Stomach (tissue), 19 donors: ENCODE measurements at regions of chr1 and their contacts with region 1.

Region 1: DNA sequence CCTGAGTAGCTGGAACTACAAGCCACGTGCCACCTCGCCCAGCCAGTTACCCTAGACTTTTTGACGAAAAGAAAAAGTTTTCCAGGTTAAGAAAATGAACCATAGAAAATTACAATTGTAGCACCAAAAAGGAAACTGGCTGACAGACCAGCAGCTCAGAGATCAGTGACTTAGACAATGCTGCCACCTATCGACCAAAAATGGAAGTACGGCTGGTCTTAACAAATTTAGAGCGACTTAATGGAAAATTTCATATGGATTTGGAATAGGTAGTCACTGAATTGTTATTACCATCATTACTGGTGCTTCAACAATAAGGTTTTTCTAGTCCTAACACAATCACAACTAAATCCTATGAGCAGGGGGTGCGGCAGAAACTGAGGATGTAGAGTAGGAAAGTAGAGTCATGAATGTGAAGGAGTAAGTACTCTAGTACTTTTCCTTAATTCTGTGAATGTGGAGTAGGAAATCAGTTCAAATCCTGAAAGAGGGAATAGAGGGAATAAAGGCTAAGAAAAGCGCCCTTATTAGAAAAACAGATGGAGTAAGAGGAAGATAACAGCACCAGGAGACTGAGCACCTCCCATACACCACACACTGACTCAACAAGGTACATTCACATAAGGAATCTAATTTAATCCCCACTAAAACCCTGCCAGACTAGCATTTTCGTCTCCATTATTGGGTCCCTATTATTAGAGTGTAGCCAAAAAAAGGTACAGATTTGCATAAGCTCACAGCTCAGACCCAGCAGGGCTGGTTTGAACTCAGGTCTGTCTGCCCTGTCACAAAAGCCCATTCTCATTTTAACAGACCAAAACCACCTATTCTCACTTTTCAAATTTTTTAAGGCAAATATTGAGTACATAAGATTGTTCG is 37.9 kb upstream of the MGST3 start:
- DNase-seq: peak; percentile 85 to 92
- H3K4me3 ChIP-seq: no peak overlapping the region
- H3K27ac ChIP-seq: no peak overlapping the region
- H3K4me1 ChIP-seq: peaks cover 5 to 8% (median 7%) of the 10 kb centered on the region in 4 donors
- H3K27me3 ChIP-seq: peaks cover 0 to 35% (median 0%) of the 10 kb centered on the region in 3 donors
- CTCF ChIP-seq: peak in 6 of 7 experiments; percentile 82 to 96 (median 94)
- EP300 ChIP-seq: no peak
- POLR2A ChIP-seq: no peak

Region 2: GRCh38 chr1:165330483-165330882 is 262.7 kb before region 1 on chr1:
- intact Hi-C with region 1: no loop called
- DNase-seq: no peak
- H3K4me3 ChIP-seq: no peak overlapping the region
- H3K27ac ChIP-seq: no peak overlapping the region
- H3K4me1 ChIP-seq: no peaks in the 10 kb centered on the region
- H3K27me3 ChIP-seq: peaks cover 0 to 23% (median 0%) of the 10 kb centered on the region in 3 donors
- CTCF ChIP-seq: no peak
- EP300 ChIP-seq: no peak
- POLR2A ChIP-seq: no peak

Region 3: DNA sequence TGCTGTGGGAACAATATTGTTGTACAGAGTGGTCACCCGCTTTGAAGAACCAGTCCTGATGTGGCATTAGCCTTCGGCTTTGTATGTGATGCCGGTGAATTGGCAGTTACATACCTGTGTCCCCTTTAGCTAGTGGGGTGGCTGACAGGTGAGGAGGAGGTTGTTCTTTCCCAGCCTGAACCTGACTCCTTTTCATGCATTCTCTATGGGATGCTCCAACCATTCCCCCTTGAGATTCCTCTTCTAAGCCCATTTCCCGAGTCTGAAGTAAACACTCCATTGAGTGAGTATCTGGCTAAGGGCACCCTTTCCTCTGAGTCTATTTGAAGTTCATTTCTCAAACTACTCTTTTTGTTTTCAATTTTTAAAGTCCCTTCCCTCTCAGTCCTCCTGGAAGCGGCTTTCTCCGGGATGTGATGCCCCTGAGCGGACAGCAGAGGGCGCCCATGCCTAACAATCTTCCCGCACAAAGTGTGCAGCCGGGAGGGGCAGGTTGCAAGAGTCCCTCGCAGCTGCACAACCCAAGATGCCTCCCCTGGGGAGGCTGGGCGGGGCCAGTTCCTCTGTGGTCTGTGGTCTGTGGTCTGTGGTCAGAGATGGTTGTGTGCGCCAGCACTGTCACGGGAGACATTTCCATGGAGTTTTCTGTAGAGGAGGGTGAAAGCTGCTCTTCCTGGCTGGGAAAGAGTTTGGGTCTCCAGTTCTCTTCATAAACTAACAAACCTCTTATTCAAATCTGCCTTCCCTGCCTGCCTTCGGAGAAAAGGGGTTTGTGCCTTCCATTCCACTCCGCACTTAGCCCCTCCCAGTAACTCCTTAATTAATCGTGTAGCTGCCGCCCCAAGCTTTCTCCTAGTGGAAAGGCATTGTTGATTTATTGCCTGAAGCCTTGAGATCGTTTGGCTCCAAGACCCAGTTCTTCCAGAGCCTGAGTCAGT is 200.3 kb before region 1 on chr1:
- intact Hi-C with region 1: loop called (anchors 2 kb)
- DNase-seq: peak; percentile 76 to 93
- H3K4me3 ChIP-seq: peak overlapping the region; percentile 8 to 19 (median 13)
- H3K27ac ChIP-seq: peak overlapping the region in 1 of 5 donors; percentile 11
- H3K4me1 ChIP-seq: peaks cover 0 to 17% (median 14%) of the 10 kb centered on the region in 4 donors
- H3K27me3 ChIP-seq: peaks cover 0 to 50% (median 5%) of the 10 kb centered on the region in 3 donors
- CTCF ChIP-seq: peak in 5 of 7 experiments; percentile 72 to 92 (median 91)
- EP300 ChIP-seq: no peak
- POLR2A ChIP-seq: no peak

Region 4: DNA sequence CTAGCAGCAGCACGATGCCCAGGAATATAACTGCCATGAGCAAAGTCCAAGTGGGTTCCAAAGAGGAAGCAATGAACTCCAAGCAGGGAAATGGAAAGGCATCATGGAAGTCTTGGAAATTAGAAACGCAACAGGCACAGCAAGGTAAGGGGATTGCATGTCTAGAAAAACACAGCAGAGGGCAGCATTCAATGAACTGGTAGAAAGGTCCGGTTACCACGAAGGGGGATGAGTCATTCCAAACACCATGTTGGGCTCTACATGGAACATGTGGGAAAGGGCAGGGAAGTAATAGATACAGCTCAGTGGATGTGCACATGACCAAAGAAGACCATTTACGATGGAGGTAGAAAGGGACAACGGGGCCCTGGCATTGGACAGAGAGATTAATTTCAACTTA is 184.7 kb before region 1 on chr1:
- intact Hi-C with region 1: loop called (anchors 5 kb)
- DNase-seq: peak; percentile 32 to 43
- H3K4me3 ChIP-seq: no peak overlapping the region
- H3K27ac ChIP-seq: no peak overlapping the region
- H3K4me1 ChIP-seq: no peaks in the 10 kb centered on the region
- H3K27me3 ChIP-seq: peaks cover 0 to 20% (median 0%) of the 10 kb centered on the region in 3 donors
- CTCF ChIP-seq: peak in 4 of 7 experiments; percentile 21 to 51 (median 34)
- EP300 ChIP-seq: no peak
- POLR2A ChIP-seq: no peak

Region 5: GRCh38 chr1:165467706-165468105 is 125.5 kb before region 1 on chr1:
- intact Hi-C with region 1: no loop called
- DNase-seq: peak in 1 of 2 donors; percentile 35
- H3K4me3 ChIP-seq: no peak overlapping the region
- H3K27ac ChIP-seq: no peak overlapping the region
- H3K4me1 ChIP-seq: no peaks in the 10 kb centered on the region
- H3K27me3 ChIP-seq: peaks cover 0 to 14% (median 0%) of the 10 kb centered on the region in 3 donors
- CTCF ChIP-seq: no peak
- EP300 ChIP-seq: no peak
- POLR2A ChIP-seq: no peak